PC-3 (cell line): ENCODE measurements at regions of chrX and their contacts with region 1.

Region 1: DNA sequence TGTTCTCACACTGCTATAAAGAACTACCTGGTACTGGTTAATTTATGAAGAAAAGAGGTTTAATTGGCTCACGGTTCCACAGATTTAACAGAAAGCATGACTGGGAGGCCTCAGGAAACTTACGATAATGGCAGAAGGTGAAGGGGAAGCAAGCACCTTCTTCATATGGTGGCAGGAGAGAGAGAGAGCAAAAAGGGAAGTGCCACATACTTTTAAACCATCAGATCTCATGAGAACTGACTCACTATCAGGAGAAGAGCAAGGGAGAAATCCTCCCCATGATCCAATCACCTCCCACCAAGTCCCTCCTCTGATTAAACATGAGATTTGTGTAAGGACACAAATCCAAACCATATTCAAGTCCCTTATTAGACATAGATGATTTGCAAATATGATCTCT is 12.3 kb upstream of the RAP2C start:
- DNase-seq: no peak
- ATAC-seq: no peak
- H3K4me3 ChIP-seq: no peak overlapping the region
- H3K27ac ChIP-seq: no peak overlapping the region
- H3K4me1 ChIP-seq: no peaks in the 10 kb centered on the region
- H3K27me3 ChIP-seq: no peaks in the 10 kb centered on the region
- CTCF ChIP-seq: no peak

Region 2: DNA sequence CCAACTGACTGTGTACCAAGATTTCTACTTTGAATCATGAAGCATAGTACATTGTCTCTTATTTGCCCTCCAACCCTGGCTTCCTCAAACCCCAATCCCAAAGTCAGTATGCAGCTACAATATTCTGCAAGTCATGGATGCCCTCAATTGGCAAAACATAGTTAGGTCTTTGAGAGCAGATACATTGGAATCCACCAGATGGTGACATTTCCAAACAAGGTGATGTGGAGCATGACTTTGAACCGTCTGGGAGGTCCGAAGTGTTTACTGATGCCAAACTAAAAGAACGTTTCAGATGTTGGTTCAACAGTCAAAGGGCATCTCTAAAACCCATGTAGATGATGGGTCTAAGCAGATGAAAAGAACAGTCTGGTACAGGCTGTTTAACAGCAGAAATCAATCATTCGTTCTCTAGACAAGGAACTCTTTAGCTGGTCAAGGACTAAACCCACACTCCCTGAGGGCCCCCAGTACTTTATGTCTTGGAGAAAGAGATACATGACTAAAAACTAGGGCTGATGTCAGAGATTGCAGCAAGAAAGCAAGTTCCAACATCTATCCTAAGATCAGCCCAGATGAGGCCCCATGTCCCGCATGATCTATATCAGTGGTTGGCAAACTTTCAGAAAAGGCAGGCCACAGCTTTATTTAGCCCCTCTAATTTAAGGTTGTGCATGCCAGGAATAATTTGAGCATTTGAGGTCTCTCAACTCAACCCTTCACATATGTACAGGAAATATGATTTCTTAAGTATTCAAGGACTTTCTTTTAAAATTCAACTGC is 59.9 kb before region 1 on chrX:
- CTCF ChIA-PET with region 1: no interaction called
- POLR2A ChIA-PET with region 1: no interaction called
- intact Hi-C with region 1: no loop called
- DNase-seq: no peak
- ATAC-seq: peak; percentile 42; the same call in 1 of the 2 replicates
- H3K4me3 ChIP-seq: no peak overlapping the region
- H3K27ac ChIP-seq: no peak overlapping the region
- H3K4me1 ChIP-seq: no peaks in the 10 kb centered on the region
- H3K27me3 ChIP-seq: no peaks in the 10 kb centered on the region
- CTCF ChIP-seq: no peak

Region 3: GRCh38 chrX:132219343-132219768 is 12.2 kb before region 1 on chrX and contains the start of gene RAP2C:
- CTCF ChIA-PET with region 1: no interaction called
- POLR2A ChIA-PET with region 1: no interaction called
- intact Hi-C with region 1: no loop called
- DNase-seq: peak; percentile 78
- ATAC-seq: peak; percentile 56
- H3K4me3 ChIP-seq: peak within 1 kb of the TSS; percentile 92
- H3K27ac ChIP-seq: peak within 1 kb of the TSS; percentile 72
- H3K4me1 ChIP-seq: 0 out of 2 replicates have a peak, but pooled peaks cover 19% of the 10 kb centered on the region
- H3K27me3 ChIP-seq: no peaks in the 10 kb centered on the region
- CTCF ChIP-seq: peak; percentile 72
- total RNA-seq, gene RAP2C: 13.0 and 13.8 TPM in 2 replicates

Region 4: DNA sequence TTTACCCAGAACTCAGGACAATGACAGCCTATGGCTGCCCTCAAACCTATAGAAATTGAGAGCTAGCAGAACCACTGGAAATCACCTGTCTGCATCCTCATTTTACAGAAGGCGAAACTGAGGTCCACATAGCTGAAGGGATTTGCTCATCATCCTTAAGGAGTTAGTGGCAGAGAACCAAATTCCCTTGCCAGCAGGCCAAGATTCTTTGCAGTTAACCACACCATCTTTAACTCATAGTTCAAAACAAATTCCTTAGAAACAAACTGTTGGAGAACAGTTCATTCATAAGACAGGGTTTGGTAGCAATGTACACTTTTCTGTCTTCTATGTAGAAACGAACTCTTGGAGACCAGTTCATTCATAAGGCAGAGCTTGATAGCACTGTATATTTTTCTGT is 25.5 kb after region 1 on chrX:
- CTCF ChIA-PET with region 1: no interaction called
- POLR2A ChIA-PET with region 1: no interaction called
- intact Hi-C with region 1: no loop called
- DNase-seq: no peak
- ATAC-seq: no peak
- H3K4me3 ChIP-seq: no peak overlapping the region
- H3K27ac ChIP-seq: no peak overlapping the region
- H3K4me1 ChIP-seq: no peaks in the 10 kb centered on the region
- H3K27me3 ChIP-seq: no peaks in the 10 kb centered on the region
- CTCF ChIP-seq: no peak

Region 5: DNA sequence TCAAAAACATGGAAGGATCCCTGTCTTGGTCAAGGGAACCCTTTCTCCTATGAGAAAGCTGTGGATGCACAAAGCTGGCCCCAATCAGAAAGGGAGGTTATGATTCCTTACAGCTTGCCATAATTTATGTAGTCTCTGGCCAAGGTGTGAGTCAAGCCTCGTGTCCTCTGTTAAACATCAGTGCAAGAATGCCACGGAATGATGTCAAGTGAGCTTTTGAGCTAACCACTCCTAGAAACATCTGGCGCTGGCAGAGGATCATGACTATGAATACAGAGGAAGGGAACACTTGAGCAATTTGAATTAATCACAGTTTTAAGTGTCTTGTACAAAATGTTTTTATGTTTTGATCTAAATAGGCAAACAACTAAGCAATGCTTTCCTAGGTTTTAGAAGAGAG is 39.1 kb after region 1 on chrX:
- CTCF ChIA-PET with region 1: no interaction called
- POLR2A ChIA-PET with region 1: no interaction called
- intact Hi-C with region 1: loop called (anchors 5 kb)
- DNase-seq: peak; percentile 49
- ATAC-seq: peak; percentile 87
- H3K4me3 ChIP-seq: peak overlapping the region; percentile 37; the same call in 1 of the 2 replicates
- H3K27ac ChIP-seq: peak overlapping the region; percentile 49
- H3K4me1 ChIP-seq: peaks cover 19% of the 10 kb centered on the region
- H3K27me3 ChIP-seq: no peaks in the 10 kb centered on the region
- CTCF ChIP-seq: no peak

Region 6: DNA sequence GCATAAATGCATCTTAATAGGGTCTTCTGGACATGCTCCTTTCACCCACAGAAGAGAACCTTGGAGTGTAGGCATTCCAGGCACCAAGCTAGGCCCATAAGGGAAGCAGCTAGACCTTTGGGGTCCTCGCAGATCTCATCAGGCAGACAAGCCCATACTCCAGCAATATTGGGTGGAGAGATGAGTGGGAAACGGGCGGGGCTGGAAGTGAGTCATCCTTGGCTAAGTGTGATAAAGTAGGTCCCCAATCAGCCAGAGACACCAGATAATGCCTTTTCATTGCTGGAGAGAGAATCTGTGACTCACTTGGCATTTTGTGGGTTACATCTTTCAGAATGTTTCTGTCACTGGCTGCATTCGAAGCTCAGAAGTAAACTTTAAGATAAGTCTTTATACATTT is 390.5 kb after region 1 on chrX:
- CTCF ChIA-PET with region 1: interaction called, 10 read pairs
- POLR2A ChIA-PET with region 1: no interaction called
- intact Hi-C with region 1: no loop called
- DNase-seq: peak; percentile 48
- ATAC-seq: peak; percentile 53; the same call in 1 of the 2 replicates
- H3K4me3 ChIP-seq: no peak overlapping the region
- H3K27ac ChIP-seq: no peak overlapping the region
- H3K4me1 ChIP-seq: peaks cover 7% of the 10 kb centered on the region; the same call in 1 of the 2 replicates
- H3K27me3 ChIP-seq: no peaks in the 10 kb centered on the region
- CTCF ChIP-seq: no peak